ENCODE measurements at regions of chr10 and their contacts with region 1.

Region 1: GRCh38 chr10:73848821-73849489 is 25.4 kb downstream of the CAMK2G start:
- DNase-seq: peak; percentile 90
- H3K4me3 ChIP-seq: no peak overlapping the region
- H3K27ac ChIP-seq: peak overlapping the region; percentile 72 to 91 (median 86)
- H3K4me1 ChIP-seq: peaks cover 5 to 27% (median 12%) of the 10 kb centered on the region in 4 donors
- H3K27me3 ChIP-seq: no peaks in the 10 kb centered on the region
- CTCF ChIP-seq: peak; percentile 99 to 100 (median 99)
- EP300 ChIP-seq: no peak
- POLR2A ChIP-seq: no peak

Region 2: DNA sequence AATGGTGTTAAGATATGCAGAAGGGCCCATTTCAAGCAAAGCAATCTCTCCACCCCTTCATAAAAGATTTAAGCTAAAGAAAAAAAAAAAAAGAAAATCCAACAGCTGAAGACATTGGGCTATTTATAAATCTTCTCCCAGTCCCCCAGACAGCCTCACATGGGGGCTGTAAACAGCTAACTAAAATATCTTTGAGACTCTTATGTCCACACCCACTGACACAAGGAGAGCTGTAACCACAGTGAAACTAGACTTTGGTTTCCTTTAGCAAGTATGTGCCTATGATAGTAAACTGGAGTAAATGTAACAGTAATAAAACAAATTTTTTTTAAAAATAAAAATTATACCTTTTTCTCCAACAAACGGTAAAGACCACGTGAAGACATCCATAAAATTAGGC is 381.7 kb before region 1 on chr10:
- in situ Hi-C with region 1: no loop called
- intact Hi-C with region 1: no loop called
- DNase-seq: no peak
- H3K4me3 ChIP-seq: no peak overlapping the region
- H3K27ac ChIP-seq: no peak overlapping the region
- H3K4me1 ChIP-seq: no peaks in the 10 kb centered on the region
- H3K27me3 ChIP-seq: no peaks in the 10 kb centered on the region
- CTCF ChIP-seq: no peak
- EP300 ChIP-seq: no peak
- POLR2A ChIP-seq: no peak

Region 3: GRCh38 chr10:73871915-73872710 is 23.2 kb after region 1 on chr10:
- in situ Hi-C with region 1: no loop called
- intact Hi-C with region 1: loop called (anchors 2 kb)
- DNase-seq: peak; percentile 79
- H3K4me3 ChIP-seq: peak overlapping the region in 2 of 4 donors; percentile 88 to 96
- H3K27ac ChIP-seq: peak overlapping the region; percentile 79 to 90 (median 88)
- H3K4me1 ChIP-seq: peaks cover 36 to 71% (median 56%) of the 10 kb centered on the region in 4 donors
- H3K27me3 ChIP-seq: no peaks in the 10 kb centered on the region
- CTCF ChIP-seq: peak; percentile 25 to 53 (median 38)
- EP300 ChIP-seq: no peak
- POLR2A ChIP-seq: peak; percentile 37

Region 4: DNA sequence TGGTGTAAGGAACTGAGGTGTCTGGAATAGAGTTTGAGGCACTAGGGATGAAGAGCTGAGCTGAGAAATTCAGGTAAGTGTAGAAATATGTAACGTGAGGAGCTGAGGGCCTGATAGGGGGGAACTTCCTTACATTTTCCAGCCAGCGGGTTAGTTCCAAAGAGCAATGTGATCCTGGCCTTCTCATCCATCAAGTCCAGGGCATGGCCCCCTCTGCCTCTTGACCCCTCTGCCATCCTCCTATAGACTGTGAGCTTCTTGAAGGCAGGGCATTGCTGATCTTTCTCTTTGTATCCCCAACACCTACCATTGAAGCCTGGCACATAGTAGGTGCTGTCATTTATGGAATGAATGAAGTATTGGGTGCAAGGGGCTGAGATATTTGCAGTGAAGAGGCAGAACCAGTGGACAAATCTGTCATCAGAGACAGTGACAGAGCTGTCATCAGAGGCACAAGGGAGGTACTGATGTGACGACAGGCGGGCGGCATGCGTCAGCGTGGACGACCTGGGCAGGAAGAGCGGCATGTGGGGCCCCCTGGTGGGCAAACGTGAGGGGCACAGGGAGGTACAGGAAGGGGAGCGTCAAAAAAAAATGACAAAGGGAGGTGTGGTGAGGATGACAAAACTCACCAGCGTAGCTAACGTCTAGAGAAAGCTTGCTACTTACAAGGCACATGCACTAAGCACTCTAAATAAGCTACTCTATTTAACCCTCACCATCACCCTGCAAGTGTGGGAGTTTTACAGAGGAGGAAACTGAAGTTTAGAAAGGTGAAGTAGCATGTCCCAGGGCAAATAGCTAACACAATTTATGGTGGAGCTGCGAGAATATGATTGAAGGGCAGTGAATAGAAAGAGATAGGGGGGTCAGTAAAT is 30.6 kb after region 1 on chr10:
- in situ Hi-C with region 1: loop called in 3 of 4 experiments (anchors 5 kb)
- intact Hi-C with region 1: no loop called
- DNase-seq: peak; percentile 93
- H3K4me3 ChIP-seq: no peak overlapping the region
- H3K27ac ChIP-seq: peak overlapping the region in 2 of 4 donors; percentile 30 to 33
- H3K4me1 ChIP-seq: peaks cover 4 to 18% (median 9%) of the 10 kb centered on the region in 4 donors
- H3K27me3 ChIP-seq: no peaks in the 10 kb centered on the region
- CTCF ChIP-seq: peak; percentile 90 to 99 (median 95)
- EP300 ChIP-seq: no peak
- POLR2A ChIP-seq: peak; percentile 7

Region 5: GRCh38 chr10:74103560-74104248 is 254.7 kb after region 1 on chr10:
- in situ Hi-C with region 1: no loop called
- intact Hi-C with region 1: no loop called
- DNase-seq: no peak
- H3K4me3 ChIP-seq: no peak overlapping the region
- H3K27ac ChIP-seq: no peak overlapping the region
- H3K4me1 ChIP-seq: no peaks in the 10 kb centered on the region
- H3K27me3 ChIP-seq: no peaks in the 10 kb centered on the region
- CTCF ChIP-seq: peak in 1 of 5 experiments; percentile 13
- EP300 ChIP-seq: no peak
- POLR2A ChIP-seq: no peak

Region 6: GRCh38 chr10:74234569-74234968 is 385.6 kb after region 1 on chr10:
- in situ Hi-C with region 1: no loop called
- intact Hi-C with region 1: no loop called
- DNase-seq: no peak
- H3K4me3 ChIP-seq: no peak overlapping the region
- H3K27ac ChIP-seq: no peak overlapping the region
- H3K4me1 ChIP-seq: no peaks in the 10 kb centered on the region
- H3K27me3 ChIP-seq: no peaks in the 10 kb centered on the region
- CTCF ChIP-seq: peak; percentile 22 to 34 (median 26)
- EP300 ChIP-seq: no peak
- POLR2A ChIP-seq: no peak